ENCODE measurements at regions of chr1 and their contacts with region 1.

Region 1: GRCh38 chr1:152459596-152460528 is 45.8 kb upstream of the CRNN start:
- DNase-seq: peak; percentile 84
- ATAC-seq: peak; percentile 96
- H3K4me3 ChIP-seq: peak overlapping the region; percentile 25; the same call in 1 of the 2 replicates
- H3K27ac ChIP-seq: peak overlapping the region; percentile 51
- H3K4me1 ChIP-seq: peaks cover 10% of the 10 kb centered on the region
- H3K27me3 ChIP-seq: no peaks in the 10 kb centered on the region
- CTCF ChIP-seq: peak; percentile 64 to 88 (median 83)
- EP300 ChIP-seq: 0 out of 4 replicates have a peak, but pooled peaks of 1 of the 2 experiments have one; percentile 27
- POLR2A ChIP-seq: peak; percentile 51; the same call in 1 of the 2 replicates
- RAD21 ChIP-seq: 0 out of 2 replicates have a peak, but pooled peaks have one; percentile 21

Region 2: DNA sequence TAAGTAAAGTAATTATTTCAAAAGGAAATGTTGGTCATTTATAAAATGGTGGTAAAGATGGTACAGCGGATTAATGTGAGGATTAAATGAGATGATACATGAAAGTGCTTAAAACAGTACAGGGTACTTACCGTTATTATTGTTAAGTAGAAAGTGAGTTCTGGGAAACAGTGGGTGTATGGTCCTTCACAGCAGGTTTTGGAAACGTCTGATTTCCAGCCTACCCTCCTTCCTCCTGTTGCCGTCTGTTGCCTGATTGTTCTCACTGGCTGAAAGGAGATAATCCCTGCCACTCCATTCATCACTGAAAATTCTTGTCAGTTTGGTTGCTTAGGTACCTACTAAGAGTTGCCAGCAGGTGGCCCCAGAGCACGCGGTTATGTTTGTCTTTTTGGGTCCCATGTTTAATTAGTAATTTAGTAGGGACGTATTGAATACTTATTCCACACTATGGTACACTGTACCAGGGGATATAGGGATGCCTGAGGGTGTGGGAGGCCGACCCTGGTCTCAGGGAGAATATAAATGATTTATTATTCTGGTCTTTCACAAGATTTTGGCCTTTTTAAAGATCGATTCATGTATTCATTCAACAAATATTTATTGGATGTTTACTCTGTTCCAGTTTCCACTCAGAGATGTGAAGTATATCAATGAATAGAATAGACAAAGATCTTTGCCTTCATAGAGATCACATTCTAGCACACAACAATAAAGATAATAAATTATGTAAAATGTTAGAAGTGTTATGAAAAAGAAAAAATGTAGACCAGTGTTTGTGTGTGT is 270.0 kb before region 1 on chr1:
- CTCF ChIA-PET with region 1: interaction called, 145 read pairs
- POLR2A ChIA-PET with region 1: interaction called, 3 read pairs
- RAD21 ChIA-PET with region 1: interaction called, 63 read pairs
- SMC1A ChIA-PET with region 1: interaction called, 34 read pairs
- in situ Hi-C with region 1: loop called (anchors 5 kb)
- intact Hi-C with region 1: loop called (anchors 1 kb)
- DNase-seq: no peak
- ATAC-seq: peak; percentile 85
- H3K4me3 ChIP-seq: peak overlapping the region; percentile 59; the same call in 1 of the 2 replicates
- H3K27ac ChIP-seq: no peak overlapping the region
- H3K4me1 ChIP-seq: no peaks in the 10 kb centered on the region; the same call in 1 of the 2 replicates
- H3K27me3 ChIP-seq: no peaks in the 10 kb centered on the region
- CTCF ChIP-seq: peak; percentile 70 to 74 (median 74)
- EP300 ChIP-seq: no peak
- POLR2A ChIP-seq: no peak
- RAD21 ChIP-seq: peak; percentile 77

Region 3: GRCh38 chr1:152398812-152399698 is 60.8 kb before region 1 on chr1:
- CTCF ChIA-PET with region 1: interaction called, 53 read pairs
- POLR2A ChIA-PET with region 1: interaction called, 3 read pairs
- RAD21 ChIA-PET with region 1: interaction called, 13 read pairs
- SMC1A ChIA-PET with region 1: interaction called, 11 read pairs
- in situ Hi-C with region 1: no loop called
- intact Hi-C with region 1: loop called (anchors 1 kb)
- DNase-seq: no peak
- ATAC-seq: peak; percentile 67
- H3K4me3 ChIP-seq: no peak overlapping the region
- H3K27ac ChIP-seq: no peak overlapping the region
- H3K4me1 ChIP-seq: no peaks in the 10 kb centered on the region
- H3K27me3 ChIP-seq: no peaks in the 10 kb centered on the region; a peak in 1 of 4 replicates
- CTCF ChIP-seq: peak; percentile 38 to 53 (median 51); a peak in 5 of 6 replicates
- EP300 ChIP-seq: no peak
- POLR2A ChIP-seq: no peak
- RAD21 ChIP-seq: peak; percentile 46

Region 4: DNA sequence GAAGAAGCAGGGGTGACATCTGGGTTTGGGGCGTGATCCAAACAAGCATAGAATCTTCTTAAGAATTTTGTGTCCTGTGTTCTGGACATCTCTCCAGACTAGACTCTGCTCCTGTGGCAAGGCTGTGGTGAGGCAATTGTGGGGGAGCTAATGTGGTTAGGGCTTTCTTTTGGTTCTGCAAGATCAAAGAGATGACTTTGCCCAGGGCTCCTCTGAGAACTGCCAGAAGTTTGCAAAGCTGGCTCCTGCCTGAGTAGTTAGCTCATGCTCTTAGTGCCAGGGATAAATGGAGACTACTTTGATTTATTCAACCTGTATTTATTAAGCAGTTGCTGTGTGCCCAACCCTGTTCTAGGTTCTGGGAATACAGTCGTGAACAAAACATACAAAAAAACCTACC is 11.8 kb before region 1 on chr1:
- CTCF ChIA-PET with region 1: interaction called, 49 read pairs
- POLR2A ChIA-PET with region 1: no interaction called
- RAD21 ChIA-PET with region 1: interaction called, 17 read pairs
- SMC1A ChIA-PET with region 1: interaction called, 10 read pairs
- in situ Hi-C with region 1: no loop called
- intact Hi-C with region 1: no loop called
- DNase-seq: no peak
- ATAC-seq: no peak
- H3K4me3 ChIP-seq: no peak overlapping the region
- H3K27ac ChIP-seq: no peak overlapping the region
- H3K4me1 ChIP-seq: no peaks in the 10 kb centered on the region
- H3K27me3 ChIP-seq: peaks cover 0 to 3% of the 10 kb centered on the region in 2 experiments; a peak in 2 of 4 replicates
- CTCF ChIP-seq: no peak
- EP300 ChIP-seq: no peak
- POLR2A ChIP-seq: no peak
- RAD21 ChIP-seq: no peak

Region 5: DNA sequence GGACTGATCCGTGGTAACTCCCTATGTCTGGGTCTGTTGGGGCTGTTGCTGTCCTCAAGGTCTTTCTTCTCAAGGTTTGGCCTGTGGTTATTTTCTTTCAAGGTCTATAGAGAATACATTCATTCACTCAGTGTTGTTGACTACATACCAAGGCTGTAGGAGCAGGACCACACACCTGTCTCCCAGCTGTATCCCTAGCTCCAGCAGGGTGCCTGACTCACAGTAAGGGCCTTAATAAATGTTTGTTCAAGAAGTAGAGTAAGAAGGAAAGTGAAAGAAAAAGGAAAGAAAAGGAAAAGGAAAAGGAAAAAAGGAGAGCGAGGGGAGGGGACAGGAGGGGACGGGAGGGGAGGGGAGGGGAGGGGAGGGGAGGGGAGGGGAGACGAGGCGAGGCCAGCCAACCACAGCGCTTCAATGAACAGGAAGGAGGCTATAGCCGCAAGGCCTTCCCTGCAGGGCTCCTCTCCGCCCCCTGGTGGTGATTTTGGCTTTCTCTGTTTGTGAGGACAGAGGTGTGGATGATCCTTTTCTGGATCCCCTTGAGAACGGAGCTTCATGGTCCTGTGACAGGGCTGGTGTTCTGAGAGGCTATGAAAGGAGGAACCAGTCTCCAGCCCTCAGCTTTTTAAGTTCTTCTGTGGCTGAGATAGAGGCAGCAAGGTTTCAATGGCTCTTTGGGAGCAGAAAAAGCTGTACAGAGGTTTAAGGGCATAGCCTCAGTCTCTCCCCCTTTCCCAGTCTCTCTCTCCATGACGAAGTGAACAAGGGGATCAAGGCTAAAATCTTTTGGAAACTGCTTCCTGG is 20.1 kb after region 1 on chr1:
- CTCF ChIA-PET with region 1: interaction called, 22 read pairs
- POLR2A ChIA-PET with region 1: no interaction called
- RAD21 ChIA-PET with region 1: interaction called, 5 read pairs
- SMC1A ChIA-PET with region 1: no interaction called
- in situ Hi-C with region 1: no loop called
- intact Hi-C with region 1: no loop called
- DNase-seq: no peak
- ATAC-seq: peak; percentile 88
- H3K4me3 ChIP-seq: no peak overlapping the region
- H3K27ac ChIP-seq: no peak overlapping the region
- H3K4me1 ChIP-seq: no peaks in the 10 kb centered on the region
- H3K27me3 ChIP-seq: no peaks in the 10 kb centered on the region
- CTCF ChIP-seq: peak; percentile 37 to 56 (median 56)
- EP300 ChIP-seq: no peak
- POLR2A ChIP-seq: no peak
- RAD21 ChIP-seq: no peak